ENCODE measurements at regions of chr4 and their contacts with region 1.

Region 1: DNA sequence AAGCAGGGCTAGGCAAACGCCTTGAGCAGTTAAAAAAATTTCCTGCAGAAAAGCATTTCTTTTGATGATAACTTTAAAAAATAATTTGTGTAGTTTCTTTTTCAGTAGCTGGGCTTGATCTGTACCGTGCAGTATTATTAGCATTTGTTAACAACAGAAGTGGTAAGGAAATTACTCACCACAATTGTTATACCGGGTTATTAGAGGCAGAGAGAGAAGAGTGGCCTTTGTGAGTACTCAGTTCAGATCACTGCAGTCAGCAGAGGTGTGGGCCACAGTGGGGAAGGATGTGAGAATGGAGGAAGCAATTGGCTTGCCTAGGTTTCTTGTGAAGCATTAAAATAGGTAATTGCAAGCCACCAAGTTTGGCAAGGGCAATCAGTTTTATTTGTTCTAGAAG is 14.3 kb upstream of the IL21 start:
- DNase-seq: no peak
- H3K4me3 ChIP-seq: no peak overlapping the region
- H3K27ac ChIP-seq: no peak overlapping the region
- H3K4me1 ChIP-seq: no peaks in the 10 kb centered on the region
- CTCF ChIP-seq: no peak

Region 2: GRCh38 chr4:122364700-122365404 is 270.4 kb before region 1 on chr4:
- CTCF ChIA-PET with region 1: interaction called, 27 read pairs
- POLR2A ChIA-PET with region 1: no interaction called
- intact Hi-C with region 1: no loop called
- DNase-seq: no peak
- H3K4me3 ChIP-seq: no peak overlapping the region
- H3K27ac ChIP-seq: no peak overlapping the region
- H3K4me1 ChIP-seq: no peaks in the 10 kb centered on the region
- CTCF ChIP-seq: no peak

Region 3: DNA sequence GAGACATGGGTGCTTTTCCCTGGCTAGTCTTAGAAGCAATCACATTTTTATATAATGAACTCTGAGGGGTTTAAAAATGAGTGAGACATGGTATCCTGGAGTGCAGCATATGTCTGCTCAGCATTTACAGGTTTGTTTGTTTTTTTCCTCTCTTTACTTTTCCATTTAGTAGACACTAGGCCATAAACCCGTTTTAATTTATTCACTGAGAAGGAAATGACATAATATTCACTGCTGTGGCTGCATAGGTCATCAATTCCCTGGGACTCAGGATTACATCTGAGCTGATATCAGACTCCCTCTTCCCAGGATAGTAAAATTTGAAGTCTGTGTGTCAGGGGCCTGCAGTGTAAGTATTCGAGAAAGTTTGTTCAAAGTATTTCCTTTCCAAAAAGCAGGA is 582.5 kb after region 1 on chr4:
- CTCF ChIA-PET with region 1: no interaction called
- POLR2A ChIA-PET with region 1: interaction called, 11 read pairs
- intact Hi-C with region 1: no loop called
- DNase-seq: no peak
- H3K4me3 ChIP-seq: no peak overlapping the region
- H3K27ac ChIP-seq: no peak overlapping the region
- H3K4me1 ChIP-seq: no peaks in the 10 kb centered on the region
- CTCF ChIP-seq: no peak

Measured in OCI-LY7 (cell line).